Posterior cingulate gyrus (tissue), 11 donors: ENCODE measurements at regions of chr2 and their contacts with region 1.

Region 1: DNA sequence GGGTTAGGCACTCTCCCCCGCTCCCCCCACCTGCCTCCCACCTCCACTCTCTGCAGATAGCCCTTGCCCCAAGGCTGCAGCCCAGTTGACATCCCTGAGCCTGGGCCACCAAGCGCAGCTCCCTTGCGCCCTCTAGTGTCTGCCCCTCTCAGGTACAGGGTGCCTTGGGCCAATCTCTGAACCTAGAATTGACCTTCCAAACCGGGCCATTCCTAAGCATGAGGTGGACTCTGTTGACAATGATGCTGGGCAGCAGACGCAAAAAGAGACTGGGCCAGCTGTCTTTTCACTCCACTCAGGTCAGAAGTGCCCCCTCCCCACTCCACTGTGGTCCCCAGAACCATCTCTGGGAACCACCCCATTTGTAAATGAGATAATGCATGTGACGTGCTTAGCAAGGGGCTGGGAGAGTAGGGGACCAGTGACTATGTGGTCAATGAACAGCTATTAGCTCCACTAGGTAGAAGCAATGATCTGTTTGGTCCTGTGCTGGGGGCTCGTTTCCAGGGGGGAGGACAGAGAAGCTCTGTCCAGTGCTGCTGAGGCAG is 43.3 kb upstream of the PLB1 start:
- DNase-seq: peak in 8 of 10 donors; percentile 23 to 91 (median 62)

Region 2: GRCh38 chr2:27703638-27704341 is 748.8 kb before region 1 on chr2:
- intact Hi-C with region 1: loop called (anchors 2 kb)
- DNase-seq: peak; percentile 59 to 97 (median 86)

Region 3: GRCh38 chr2:28507806-28508764 is 55.5 kb after region 1 on chr2:
- intact Hi-C with region 1: no loop called
- DNase-seq: no peak